Heart right ventricle (tissue), 16 donors: ENCODE measurements at regions of chr11 and their contacts with region 1.

Region 1: DNA sequence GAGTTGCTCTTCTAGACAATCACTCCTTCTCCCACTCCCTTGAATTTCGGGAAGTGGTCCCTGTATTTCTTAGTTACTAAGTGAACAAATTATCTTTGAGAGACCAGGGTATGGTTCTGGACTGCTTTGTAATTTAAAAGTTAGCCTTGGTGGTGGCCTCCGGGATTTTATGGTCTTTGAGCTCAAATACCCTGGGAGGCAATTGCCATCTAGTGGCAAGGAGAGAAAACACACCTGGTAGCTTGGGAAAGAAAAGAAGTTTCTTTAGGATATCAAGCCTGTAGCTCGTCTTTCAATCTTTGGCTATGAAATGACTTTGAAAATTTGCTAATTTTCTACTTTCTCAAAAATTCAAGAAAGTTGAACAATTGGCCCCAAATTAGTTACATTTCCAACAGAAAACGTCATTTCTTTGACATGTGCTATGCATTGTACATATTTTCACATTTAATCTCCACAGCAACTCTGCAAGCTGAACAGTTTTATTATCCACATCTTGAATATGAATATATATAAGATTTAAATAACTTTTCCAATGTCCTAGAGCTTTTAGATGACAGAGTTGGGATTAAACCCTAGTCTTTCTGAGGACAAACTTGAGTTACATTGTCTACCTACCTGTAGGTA is 39.1 kb downstream of the MMP27 start:
- DNase-seq: no peak
- ATAC-seq: peak in 1 of 8 donors; percentile 33
- H3K4me3 ChIP-seq: no peak overlapping the region
- H3K27ac ChIP-seq: no peak overlapping the region
- H3K4me1 ChIP-seq: no peaks in the 10 kb centered on the region
- H3K27me3 ChIP-seq: peaks cover 0 to 6% (median 4%) of the 10 kb centered on the region in 7 donors
- CTCF ChIP-seq: peak; percentile 25 to 81 (median 64)

Region 2: GRCh38 chr11:102287964-102288724 is 378.3 kb before region 1 on chr11:
- intact Hi-C with region 1: loop called in 3 of 10 experiments (anchors 5 to 10 kb)
- DNase-seq: peak in 1 of 2 donors; percentile 55
- ATAC-seq: peak; percentile 74 to 92 (median 86)
- H3K4me3 ChIP-seq: peak overlapping the region in 5 of 10 donors; percentile 27 to 38 (median 28)
- H3K27ac ChIP-seq: no peak overlapping the region
- H3K4me1 ChIP-seq: peaks cover 0 to 16% (median 4%) of the 10 kb centered on the region in 9 donors
- H3K27me3 ChIP-seq: no peaks in the 10 kb centered on the region
- CTCF ChIP-seq: peak; percentile 36 to 85 (median 77)

Region 3: GRCh38 chr11:102293873-102294601 is 372.4 kb before region 1 on chr11:
- intact Hi-C with region 1: loop called in 3 of 10 experiments (anchors 5 to 10 kb)
- DNase-seq: no peak
- ATAC-seq: peak in 3 of 8 donors; percentile 55 to 73 (median 72)
- H3K4me3 ChIP-seq: peak overlapping the region in 1 of 10 donors; percentile 23
- H3K27ac ChIP-seq: no peak overlapping the region
- H3K4me1 ChIP-seq: peaks cover 0 to 10% (median 0%) of the 10 kb centered on the region in 9 donors
- H3K27me3 ChIP-seq: no peaks in the 10 kb centered on the region
- CTCF ChIP-seq: peak; percentile 23 to 77 (median 60)

Region 4: GRCh38 chr11:102332611-102332994 is 333.8 kb before region 1 on chr11:
- intact Hi-C with region 1: loop called in 1 of 10 experiments (anchors 10 kb)
- DNase-seq: no peak
- ATAC-seq: no peak
- H3K4me3 ChIP-seq: no peak overlapping the region
- H3K27ac ChIP-seq: no peak overlapping the region
- H3K4me1 ChIP-seq: no peaks in the 10 kb centered on the region
- H3K27me3 ChIP-seq: no peaks in the 10 kb centered on the region
- CTCF ChIP-seq: no peak

Region 5: GRCh38 chr11:102341844-102342318 is 324.6 kb before region 1 on chr11:
- intact Hi-C with region 1: loop called in 2 of 10 experiments (anchors 5 to 10 kb)
- DNase-seq: peak; percentile 24 to 82
- ATAC-seq: peak; percentile 43 to 74 (median 63)
- H3K4me3 ChIP-seq: no peak overlapping the region
- H3K27ac ChIP-seq: no peak overlapping the region
- H3K4me1 ChIP-seq: peaks cover 0 to 12% (median 8%) of the 10 kb centered on the region in 9 donors
- H3K27me3 ChIP-seq: no peaks in the 10 kb centered on the region
- CTCF ChIP-seq: peak; percentile 58 to 88 (median 83)